Breast epithelium (tissue), 4 donors: ENCODE measurements at regions of chr14 and their contacts with region 1.

Region 1: GRCh38 chr14:93042968-93043940 is 72.5 kb downstream of the ITPK1 start:
- DNase-seq: peak; percentile 59 to 82
- H3K4me3 ChIP-seq: no peak overlapping the region
- H3K27ac ChIP-seq: peak overlapping the region; percentile 45 to 64
- H3K4me1 ChIP-seq: peaks cover 0 to 4% of the 10 kb centered on the region in 2 donors
- H3K27me3 ChIP-seq: no peaks in the 10 kb centered on the region
- CTCF ChIP-seq: no peak
- POLR2A ChIP-seq: no peak

Region 2: DNA sequence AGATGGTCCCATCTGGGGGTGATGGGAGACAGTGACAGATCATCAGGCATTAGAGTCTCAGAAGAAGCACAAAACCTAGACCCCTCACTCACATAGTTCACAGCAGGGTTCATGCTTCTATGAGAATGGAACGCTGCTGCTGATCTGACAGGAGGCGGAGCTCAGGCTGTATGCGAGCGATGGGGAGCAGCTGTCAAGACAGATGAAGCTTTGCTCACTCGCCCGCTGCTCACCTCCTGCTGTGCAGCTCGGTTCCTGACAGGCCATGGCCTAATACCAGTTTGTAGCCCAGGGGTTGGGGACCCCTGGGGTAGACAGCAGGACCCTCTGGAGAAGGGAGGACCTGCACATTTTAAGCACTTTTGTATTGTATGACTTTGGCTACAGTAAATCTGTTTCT is 406.0 kb before region 1 on chr14:
- intact Hi-C with region 1: no loop called
- DNase-seq: no peak
- H3K4me3 ChIP-seq: no peak overlapping the region
- H3K27ac ChIP-seq: no peak overlapping the region
- H3K4me1 ChIP-seq: no peaks in the 10 kb centered on the region
- H3K27me3 ChIP-seq: no peaks in the 10 kb centered on the region
- CTCF ChIP-seq: no peak
- POLR2A ChIP-seq: no peak

Region 3: DNA sequence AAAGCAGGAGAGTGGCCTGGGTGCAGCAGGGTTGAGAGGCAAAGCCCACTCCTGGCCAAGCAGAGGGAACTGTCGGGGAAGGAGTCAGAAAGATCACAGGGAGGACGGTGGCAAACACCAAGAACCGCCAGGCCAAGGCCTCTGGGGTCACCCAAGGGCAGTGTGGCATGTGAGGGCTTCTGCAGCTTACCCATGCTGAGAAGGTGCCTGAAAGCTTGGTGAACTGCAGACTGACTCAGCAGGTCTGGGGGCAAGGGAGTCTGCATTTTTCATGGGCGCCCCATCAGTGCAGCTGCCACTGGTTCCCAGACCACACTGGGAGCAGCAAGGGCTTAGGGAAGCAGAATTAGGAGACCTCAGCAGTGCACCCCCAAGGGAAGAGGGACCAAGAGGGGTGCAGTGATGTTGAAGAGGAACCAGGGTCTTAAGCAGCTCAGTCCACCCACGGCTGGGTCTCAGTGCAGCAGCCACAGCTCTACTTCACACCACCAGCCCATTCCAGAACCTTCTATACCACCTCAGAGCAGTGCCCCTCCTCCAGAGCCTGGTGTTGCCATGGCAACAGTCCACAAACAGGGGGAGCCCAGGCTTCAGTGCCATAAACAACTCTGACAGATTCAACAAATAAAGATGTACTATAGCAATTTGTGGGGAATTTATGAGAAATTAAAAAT is 13.0 kb after region 1 on chr14:
- intact Hi-C with region 1: loop called (anchors 2 kb)
- DNase-seq: no peak
- H3K4me3 ChIP-seq: no peak overlapping the region
- H3K27ac ChIP-seq: no peak overlapping the region
- H3K4me1 ChIP-seq: no peaks in the 10 kb centered on the region
- H3K27me3 ChIP-seq: no peaks in the 10 kb centered on the region
- CTCF ChIP-seq: no peak
- POLR2A ChIP-seq: no peak

Region 4: DNA sequence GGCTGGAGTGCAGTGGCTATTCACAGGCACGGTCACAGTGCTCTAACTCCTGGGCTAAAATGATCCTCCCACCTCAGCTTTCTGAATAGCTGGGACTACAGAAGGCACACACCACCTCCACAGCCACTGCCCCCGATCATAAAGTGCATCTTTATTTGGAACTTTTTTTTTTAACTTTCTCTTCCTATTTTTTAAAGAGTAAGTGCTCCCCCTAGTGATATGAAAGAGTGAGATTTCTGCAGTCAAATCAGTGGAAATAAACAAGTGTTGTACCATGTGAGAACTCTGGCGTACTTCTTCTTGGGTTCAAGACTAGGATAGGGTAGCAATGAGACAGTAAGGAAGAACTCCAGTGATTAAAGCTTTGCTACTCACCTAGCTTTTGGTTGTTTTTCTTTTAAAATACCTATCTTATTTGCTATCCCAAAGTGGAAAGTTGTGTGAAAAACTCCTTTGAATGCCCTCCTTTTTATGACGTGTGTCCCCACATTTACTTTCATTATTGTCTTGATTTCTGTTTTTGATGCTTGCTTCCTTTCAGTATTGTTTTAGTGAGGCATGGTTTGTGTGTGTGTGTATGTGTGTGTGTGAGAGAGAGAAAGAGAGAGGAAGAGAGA is 1137.5 kb after region 1 on chr14:
- intact Hi-C with region 1: loop called (anchors 5 kb)
- DNase-seq: no peak
- H3K4me3 ChIP-seq: peak overlapping the region in 1 of 3 donors; percentile 17
- H3K27ac ChIP-seq: no peak overlapping the region
- H3K4me1 ChIP-seq: no peaks in the 10 kb centered on the region
- H3K27me3 ChIP-seq: peaks cover 0 to 11% of the 10 kb centered on the region in 2 donors
- CTCF ChIP-seq: peak in 2 of 3 donors; percentile 34 to 40
- POLR2A ChIP-seq: no peak